A549 (cell line): ENCODE measurements at regions of chr5 and their contacts with region 1.

Region 1: DNA sequence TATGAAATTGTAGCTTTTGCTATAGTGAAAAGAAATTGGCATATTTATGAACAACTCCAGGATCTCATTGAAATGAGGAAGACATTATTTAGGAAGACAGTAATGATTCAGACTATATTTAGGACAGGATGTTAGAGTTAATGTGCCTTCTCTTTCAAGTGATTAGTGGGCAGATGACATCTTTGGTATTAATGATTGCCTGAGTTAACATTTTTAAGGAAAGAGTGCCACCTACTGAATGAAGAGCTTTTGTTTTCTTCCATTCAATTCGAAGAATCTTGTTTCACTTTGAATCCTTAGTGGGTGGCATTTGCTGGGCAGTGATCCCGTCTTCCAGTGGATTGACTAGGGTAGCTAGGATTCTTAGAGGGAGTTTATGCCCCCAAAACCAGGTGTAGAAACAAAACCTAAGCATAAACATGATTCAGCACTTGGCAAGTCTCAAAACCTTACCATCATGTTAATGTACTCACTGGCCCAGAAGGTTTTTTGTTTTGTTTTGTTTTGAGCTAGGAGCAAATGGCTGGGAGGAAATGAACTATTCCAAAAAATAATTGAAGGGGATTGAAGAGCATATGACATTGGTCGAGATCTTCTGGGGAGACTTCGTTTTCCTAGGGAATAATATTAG is 23.2 kb downstream of the MAP3K1 start:
- DNase-seq: peak; percentile 25 to 60
- ATAC-seq: peak; percentile 73 to 79
- H3K4me3 ChIP-seq: no peak overlapping the region; the same call in 2 of the 3 replicates
- H3K27ac ChIP-seq: peak overlapping the region; percentile 64 to 79
- H3K4me1 ChIP-seq: peaks cover 21% of the 10 kb centered on the region; the same call in 2 of the 3 replicates
- CTCF ChIP-seq: peak; percentile 92
- EP300 ChIP-seq: no peak
- POLR2A ChIP-seq: no peak
- RAD21 ChIP-seq: peak; percentile 89 to 93

Region 2: GRCh38 chr5:56279979-56280378 is 558.5 kb before region 1 on chr5:
- CTCF ChIA-PET with region 1: interaction called, 340 read pairs
- POLR2A ChIA-PET with region 1: no interaction called
- DNase-seq: peak in 1 of 2 experiments; percentile 53
- ATAC-seq: peak in 1 of 2 experiments; percentile 55; a peak in 3 of 6 replicates
- H3K4me3 ChIP-seq: no peak overlapping the region
- H3K27ac ChIP-seq: peak overlapping the region; percentile 39 to 76; a peak in 5 of 6 replicates
- H3K4me1 ChIP-seq: peaks cover 31% of the 10 kb centered on the region
- CTCF ChIP-seq: no peak
- EP300 ChIP-seq: 0 out of 5 replicates have a peak, but pooled peaks of 1 of the 2 experiments have one; percentile 23
- POLR2A ChIP-seq: no peak
- RAD21 ChIP-seq: no peak; a peak in 1 of 5 replicates

Region 3: DNA sequence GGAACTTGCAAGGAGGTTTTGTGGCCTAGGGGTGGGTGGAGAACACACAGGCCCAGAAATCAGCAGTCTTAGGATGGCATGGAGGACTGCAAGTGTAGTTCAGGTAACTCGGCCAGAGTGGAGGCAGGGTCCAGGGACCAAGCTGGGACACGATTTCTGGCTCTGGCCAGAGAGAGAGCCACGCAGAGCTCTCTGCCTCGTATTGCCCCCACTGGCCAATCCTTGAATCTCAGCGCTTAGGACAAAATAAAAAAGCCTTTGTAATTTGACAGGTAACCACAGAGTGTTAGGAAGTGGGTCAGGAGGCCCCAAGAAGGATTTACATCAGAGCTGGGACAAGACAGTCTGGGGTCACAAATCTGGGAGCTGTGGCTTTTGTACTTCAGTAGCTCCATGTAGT is 11.5 kb before region 1 on chr5:
- CTCF ChIA-PET with region 1: interaction called, 47 read pairs
- POLR2A ChIA-PET with region 1: no interaction called
- DNase-seq: peak; percentile 16 to 33
- ATAC-seq: peak; percentile 90
- H3K4me3 ChIP-seq: no peak overlapping the region
- H3K27ac ChIP-seq: no peak overlapping the region
- H3K4me1 ChIP-seq: peaks cover 6% of the 10 kb centered on the region; the same call in 1 of the 3 replicates
- CTCF ChIP-seq: no peak
- EP300 ChIP-seq: no peak
- POLR2A ChIP-seq: no peak
- RAD21 ChIP-seq: no peak; a peak in 1 of 5 replicates

Region 4: GRCh38 chr5:56861893-56862485 is 23.5 kb after region 1 on chr5:
- CTCF ChIA-PET with region 1: interaction called, 16 read pairs
- POLR2A ChIA-PET with region 1: no interaction called
- DNase-seq: no peak
- ATAC-seq: no peak
- H3K4me3 ChIP-seq: no peak overlapping the region
- H3K27ac ChIP-seq: no peak overlapping the region
- H3K4me1 ChIP-seq: no peaks in the 10 kb centered on the region
- CTCF ChIP-seq: no peak
- EP300 ChIP-seq: no peak
- POLR2A ChIP-seq: no peak
- RAD21 ChIP-seq: no peak